ENCODE measurements at regions of chr7 and their contacts with region 1.

Region 1: DNA sequence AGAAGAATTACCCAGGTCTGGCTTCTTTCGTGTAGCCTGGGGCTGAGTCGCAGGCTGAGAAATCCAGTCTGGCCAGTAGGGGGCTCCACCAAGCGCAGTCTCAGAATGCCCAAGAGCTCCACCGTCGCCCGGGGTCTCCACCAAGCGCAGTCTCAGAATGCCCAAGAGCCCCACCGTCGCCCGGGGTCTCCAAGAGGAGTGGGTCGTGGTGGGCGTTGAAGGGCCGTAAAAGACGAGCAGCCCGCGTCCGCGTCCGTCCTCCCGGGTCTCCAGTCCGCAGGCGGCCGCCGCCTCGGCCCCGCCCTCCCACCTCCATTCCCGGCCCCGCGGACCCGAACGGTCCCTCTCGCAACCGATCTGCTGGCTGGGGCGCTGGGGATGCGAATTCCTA is 895 bp upstream of the ZYX start:
- DNase-seq: peak; percentile 76 to 90 (median 84)
- ATAC-seq: peak; percentile 73
- H3K4me3 ChIP-seq: peak overlapping the region; percentile 92
- H3K4me3 Mint-ChIP-seq: peak overlapping the region in 9 of 10 donors; percentile 84 to 96 (median 91)
- H3K27ac ChIP-seq: peak overlapping the region; percentile 91
- H3K27ac Mint-ChIP-seq: peak overlapping the region; percentile 90 to 96 (median 93)
- H3K4me1 ChIP-seq: peaks cover 58 to 70% of the 10 kb centered on the region in 2 donors
- H3K4me1 Mint-ChIP-seq: peaks cover 35 to 46% (median 42%) of the 10 kb centered on the region in 7 donors
- H3K27me3 ChIP-seq: no peaks in the 10 kb centered on the region
- H3K27me3 Mint-ChIP-seq: no peaks in the 10 kb centered on the region

Region 2: DNA sequence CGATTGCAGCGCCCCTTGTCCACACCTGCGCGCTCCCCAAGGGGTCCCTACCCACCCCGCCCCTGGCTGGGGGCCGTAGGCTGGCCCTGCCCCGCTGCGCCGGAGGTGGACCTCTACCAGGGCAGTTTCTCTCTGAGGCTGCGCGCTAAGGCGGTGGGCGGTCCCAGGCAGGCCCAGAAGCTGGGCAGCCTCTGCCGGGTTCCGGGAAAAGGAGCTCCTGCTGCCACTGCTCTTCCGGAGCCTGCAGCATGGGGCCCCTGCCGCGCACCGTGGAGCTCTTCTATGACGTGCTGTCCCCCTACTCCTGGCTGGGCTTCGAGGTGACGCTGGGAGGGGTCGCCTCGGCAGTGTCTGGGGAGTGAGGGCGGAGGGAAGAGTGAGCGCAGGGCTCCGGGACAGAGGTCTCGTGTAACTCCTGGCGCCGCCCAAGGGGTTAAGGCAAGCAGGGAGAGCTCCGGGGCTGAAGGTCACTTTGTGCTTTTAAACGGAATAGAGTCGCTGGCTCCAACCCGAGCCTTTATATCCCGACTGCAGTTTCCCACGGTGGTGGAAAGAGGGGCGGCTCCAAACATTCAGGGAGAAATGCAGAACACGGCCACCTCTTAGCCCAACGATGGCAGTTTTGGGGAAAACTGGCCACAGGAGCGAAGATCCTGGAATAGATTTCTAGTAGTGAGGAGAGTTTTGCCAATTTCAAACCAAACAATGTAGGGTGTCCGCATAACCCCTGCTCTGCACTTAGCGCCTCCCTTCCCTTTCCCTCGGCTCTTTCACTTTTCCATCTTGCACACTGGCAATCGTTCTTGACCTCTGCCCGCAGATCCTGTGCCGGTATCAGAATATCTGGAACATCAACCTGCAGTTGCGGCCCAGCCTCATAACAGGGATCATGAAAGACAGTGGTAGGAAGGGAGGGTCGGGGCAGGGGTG is 116.7 kb before region 1 on chr7 and contains the start of gene GSTK1:
- CTCF ChIA-PET with region 1: interaction called, 5 read pairs
- POLR2A ChIA-PET with region 1: interaction called, 4 read pairs
- intact Hi-C with region 1: loop called in 1 of 2 experiments (anchors 1 kb)
- DNase-seq: peak; percentile 62 to 86 (median 74)
- ATAC-seq: peak; percentile 97
- H3K4me3 ChIP-seq: peak within 1 kb of the TSS; percentile 90
- H3K4me3 Mint-ChIP-seq: peak within 1 kb of the TSS; percentile 93 to 99 (median 97)
- H3K27ac ChIP-seq: peak within 1 kb of the TSS; percentile 84
- H3K27ac Mint-ChIP-seq: peak within 1 kb of the TSS; percentile 76 to 99 (median 97)
- H3K4me1 ChIP-seq: peaks cover 34 to 40% of the 10 kb centered on the region in 2 donors
- H3K4me1 Mint-ChIP-seq: peaks cover 39 to 88% (median 66%) of the 10 kb centered on the region in 7 donors
- H3K27me3 ChIP-seq: no peaks in the 10 kb centered on the region
- H3K27me3 Mint-ChIP-seq: no peaks in the 10 kb centered on the region
- total RNA-seq, gene GSTK1: 253 to 385 (median 311) TPM

Region 3: DNA sequence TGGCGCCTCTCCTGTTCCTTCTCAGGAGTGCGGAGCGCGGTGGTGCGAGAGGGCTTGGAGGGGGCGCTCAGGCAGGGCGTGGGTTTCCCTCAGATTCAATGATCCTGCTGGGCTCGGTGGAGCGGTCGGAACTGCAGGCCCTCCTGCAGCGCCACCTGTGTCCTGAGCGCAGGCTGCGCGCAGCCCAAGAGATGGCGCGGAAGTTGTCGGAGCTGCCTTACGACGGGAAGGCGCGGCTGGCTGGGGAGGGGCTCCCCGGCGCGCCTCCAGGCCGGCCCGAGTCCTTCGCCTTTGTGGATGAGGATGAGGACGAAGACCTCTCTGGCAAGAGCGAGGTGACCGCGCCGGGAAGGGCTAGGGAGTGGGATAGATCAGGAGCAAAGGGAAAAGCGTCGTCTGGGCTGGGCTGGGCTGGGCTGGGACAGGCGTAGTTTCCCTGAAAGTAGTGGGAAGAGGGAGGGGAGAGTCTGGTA is 34.8 kb before region 1 on chr7:
- CTCF ChIA-PET with region 1: interaction called, 8 read pairs
- POLR2A ChIA-PET with region 1: interaction called, 3 read pairs
- intact Hi-C with region 1: loop called in 1 of 2 experiments (anchors 2 kb)
- DNase-seq: peak; percentile 31 to 62 (median 56)
- ATAC-seq: peak; percentile 98
- H3K4me3 ChIP-seq: peak overlapping the region; percentile 29
- H3K4me3 Mint-ChIP-seq: peak overlapping the region; percentile 56 to 87 (median 76)
- H3K27ac ChIP-seq: no peak overlapping the region
- H3K27ac Mint-ChIP-seq: peak overlapping the region in 3 of 9 donors; percentile 3 to 79 (median 56)
- H3K4me1 ChIP-seq: peaks cover 0 to 4% of the 10 kb centered on the region in 2 donors
- H3K4me1 Mint-ChIP-seq: peaks cover 5 to 13% (median 9%) of the 10 kb centered on the region in 7 donors
- H3K27me3 ChIP-seq: no peaks in the 10 kb centered on the region
- H3K27me3 Mint-ChIP-seq: peaks cover 0 to 57% (median 2%) of the 10 kb centered on the region in 5 donors

Region 4: DNA sequence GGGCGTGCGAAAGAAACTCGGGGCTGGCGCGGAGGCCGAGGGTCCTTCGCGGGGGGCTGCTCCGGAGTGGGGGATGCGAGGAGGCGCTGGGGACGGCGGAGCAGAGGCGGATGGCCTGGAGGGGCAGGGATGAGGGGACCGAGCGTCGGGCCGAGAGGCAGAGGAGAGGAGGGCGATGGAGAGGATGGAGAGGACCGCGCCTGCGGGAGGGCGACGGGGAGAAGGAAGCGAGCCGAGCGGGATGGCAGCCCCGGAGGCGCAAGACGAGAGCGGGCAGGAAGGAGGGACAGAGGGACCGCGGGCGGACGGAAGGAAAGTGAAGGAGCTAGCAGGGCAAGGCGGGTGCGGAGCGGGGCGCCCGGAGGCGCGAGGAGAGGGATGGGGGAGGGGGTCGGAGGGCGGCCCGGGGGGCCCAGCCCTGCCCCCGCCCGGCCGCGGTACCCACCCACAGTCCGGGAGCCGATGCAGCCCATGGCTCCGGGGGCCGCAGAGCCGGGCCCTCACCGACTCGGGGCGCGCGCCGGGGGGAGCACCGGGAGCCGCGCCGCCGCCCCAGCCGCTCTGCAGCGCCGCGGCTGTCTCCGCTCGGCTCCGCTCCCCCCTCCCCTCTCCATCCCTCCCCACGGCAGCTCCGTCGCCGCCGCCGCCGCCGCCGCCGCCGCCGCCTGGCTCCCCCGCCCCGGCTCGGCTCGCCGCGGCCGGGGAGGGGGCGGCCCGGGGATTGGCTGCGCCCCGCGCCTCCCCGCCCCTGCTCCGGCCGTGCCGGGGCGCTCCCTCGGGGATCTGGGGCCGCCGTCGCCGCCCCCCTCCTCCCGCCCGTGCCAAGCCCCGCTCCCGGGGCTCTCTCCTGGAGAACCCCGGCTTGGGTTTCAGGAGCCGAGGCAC is 17.9 kb before region 1 on chr7 and contains the start of gene FAM131B:
- CTCF ChIA-PET with region 1: interaction called, 3 read pairs
- POLR2A ChIA-PET with region 1: interaction called, 6 read pairs
- intact Hi-C with region 1: loop called in 1 of 2 experiments (anchors 1 kb)
- DNase-seq: peak in 2 of 9 donors; percentile 31 to 34
- ATAC-seq: peak; percentile 83
- H3K4me3 ChIP-seq: peak within 1 kb of the TSS; percentile 59
- H3K4me3 Mint-ChIP-seq: peak within 1 kb of the TSS; percentile 59 to 91 (median 85)
- H3K27ac ChIP-seq: no peak within 1 kb of the TSS
- H3K27ac Mint-ChIP-seq: peak within 1 kb of the TSS in 3 of 9 donors; percentile 34 to 68 (median 41)
- H3K4me1 ChIP-seq: peaks cover 6% of the 10 kb centered on the region in 2 donors
- H3K4me1 Mint-ChIP-seq: peaks cover 3 to 17% (median 9%) of the 10 kb centered on the region in 7 donors
- H3K27me3 ChIP-seq: peaks cover 5 to 6% of the 10 kb centered on the region in 2 donors
- H3K27me3 Mint-ChIP-seq: peaks cover 19 to 81% (median 33%) of the 10 kb centered on the region in 5 donors
- total RNA-seq, gene FAM131B: 0.19 to 1.4 (median 0.53) TPM in 3 of 5 experiments, not detected in the others

Region 5: DNA sequence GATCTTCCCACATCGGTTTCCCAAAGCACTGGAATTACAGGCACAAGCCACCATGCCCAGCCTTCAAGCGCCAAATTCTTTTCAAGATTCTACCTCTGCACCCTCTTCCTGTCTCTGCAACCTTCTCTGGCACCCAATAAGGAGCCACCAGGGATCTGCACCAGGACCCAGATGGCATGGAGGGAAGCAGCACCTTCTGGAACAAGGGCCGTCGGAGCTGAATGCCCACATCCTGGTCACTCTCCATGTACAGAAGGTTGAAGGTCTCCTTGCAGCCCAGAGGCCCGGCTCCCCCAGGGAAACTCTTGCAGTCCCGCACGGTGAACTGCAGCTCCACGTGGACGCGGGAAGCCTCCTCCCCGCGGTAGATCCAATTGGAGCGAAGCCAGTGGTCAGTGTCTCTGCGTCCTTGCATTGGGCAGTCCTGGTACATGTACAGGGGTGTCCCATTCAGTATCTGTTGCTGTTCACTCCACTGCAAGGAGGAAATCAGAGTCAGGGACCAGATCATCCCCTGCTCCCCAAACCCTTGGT is 20.9 kb after region 1 on chr7:
- CTCF ChIA-PET with region 1: interaction called, 40 read pairs
- POLR2A ChIA-PET with region 1: interaction called, 223 read pairs
- intact Hi-C with region 1: no loop called
- DNase-seq: no peak
- ATAC-seq: no peak
- H3K4me3 ChIP-seq: no peak overlapping the region
- H3K4me3 Mint-ChIP-seq: no peak overlapping the region
- H3K27ac ChIP-seq: peak overlapping the region; percentile 3
- H3K27ac Mint-ChIP-seq: peak overlapping the region in 6 of 9 donors; percentile 41 to 82 (median 63)
- H3K4me1 ChIP-seq: peaks cover 3 to 18% of the 10 kb centered on the region in 2 donors
- H3K4me1 Mint-ChIP-seq: peaks cover 0 to 52% (median 40%) of the 10 kb centered on the region in 7 donors
- H3K27me3 ChIP-seq: no peaks in the 10 kb centered on the region
- H3K27me3 Mint-ChIP-seq: peaks cover 0 to 7% (median 0%) of the 10 kb centered on the region in 5 donors

Region 6: GRCh38 chr7:143416565-143417149 is 36.4 kb after region 1 on chr7:
- CTCF ChIA-PET with region 1: interaction called, 17 read pairs
- POLR2A ChIA-PET with region 1: interaction called, 7 read pairs
- intact Hi-C with region 1: loop called (anchors 1 to 2 kb)
- DNase-seq: peak in 6 of 9 donors; percentile 34 to 58 (median 52)
- ATAC-seq: peak; percentile 74
- H3K4me3 ChIP-seq: no peak overlapping the region
- H3K4me3 Mint-ChIP-seq: no peak overlapping the region
- H3K27ac ChIP-seq: no peak overlapping the region
- H3K27ac Mint-ChIP-seq: no peak overlapping the region
- H3K4me1 ChIP-seq: peaks cover 0 to 3% of the 10 kb centered on the region in 2 donors
- H3K4me1 Mint-ChIP-seq: peaks cover 2 to 56% (median 46%) of the 10 kb centered on the region in 7 donors
- H3K27me3 ChIP-seq: no peaks in the 10 kb centered on the region
- H3K27me3 Mint-ChIP-seq: peaks cover 0 to 21% (median 0%) of the 10 kb centered on the region in 5 donors